ENCODE measurements at regions of chr1 and their contacts with region 1.

Region 1: DNA sequence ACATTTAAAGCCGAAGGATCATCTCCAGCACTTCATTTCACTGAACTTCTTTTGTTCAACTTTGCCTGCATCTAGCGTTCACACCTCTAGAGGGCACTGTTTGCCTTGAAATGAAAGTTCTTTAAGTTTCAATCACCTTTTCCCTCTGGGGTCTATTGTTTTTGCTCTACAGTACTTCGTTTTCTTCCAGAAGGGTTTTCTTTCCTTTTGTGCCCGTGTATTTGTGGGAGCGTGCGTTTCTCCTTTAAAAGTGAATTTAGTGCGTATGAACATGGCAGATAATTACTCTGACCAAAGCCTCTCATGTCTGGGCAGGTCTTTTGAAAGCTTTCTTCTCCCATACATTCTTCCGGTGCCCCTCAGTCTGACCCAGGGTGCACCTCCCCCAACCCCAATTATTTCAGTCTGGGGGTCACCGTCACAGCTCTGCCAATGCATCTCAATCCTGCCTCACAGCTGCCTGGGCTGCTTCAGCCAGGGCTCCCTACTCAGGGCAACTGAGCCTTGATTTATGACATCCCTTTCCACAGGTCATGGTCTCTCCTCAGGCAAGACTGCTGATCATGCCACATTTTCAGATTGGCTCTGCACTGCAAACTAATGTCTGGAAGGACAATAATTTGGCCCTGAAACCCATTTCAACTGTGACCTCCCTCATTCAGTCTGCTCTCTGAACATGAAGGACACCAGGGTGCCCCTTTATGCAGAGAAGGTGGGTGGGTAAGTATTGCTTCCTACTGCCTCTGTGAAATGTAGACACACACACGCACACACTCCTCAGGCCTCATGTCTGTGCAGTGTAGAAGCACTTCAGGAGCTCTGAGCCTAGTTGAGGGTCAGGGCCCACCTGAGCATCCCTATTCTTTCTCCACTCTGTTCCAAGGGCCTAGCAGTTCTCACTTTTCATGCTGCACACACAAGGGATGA is 88.6 kb downstream of the NUF2 start:
- DNase-seq: peak; percentile 63
- H3K4me3 Mint-ChIP-seq: no peak overlapping the region
- H3K27ac Mint-ChIP-seq: no peak overlapping the region
- H3K4me1 Mint-ChIP-seq: peaks cover 2% of the 10 kb centered on the region
- H3K27me3 Mint-ChIP-seq: peaks cover 12% of the 10 kb centered on the region

Region 2: DNA sequence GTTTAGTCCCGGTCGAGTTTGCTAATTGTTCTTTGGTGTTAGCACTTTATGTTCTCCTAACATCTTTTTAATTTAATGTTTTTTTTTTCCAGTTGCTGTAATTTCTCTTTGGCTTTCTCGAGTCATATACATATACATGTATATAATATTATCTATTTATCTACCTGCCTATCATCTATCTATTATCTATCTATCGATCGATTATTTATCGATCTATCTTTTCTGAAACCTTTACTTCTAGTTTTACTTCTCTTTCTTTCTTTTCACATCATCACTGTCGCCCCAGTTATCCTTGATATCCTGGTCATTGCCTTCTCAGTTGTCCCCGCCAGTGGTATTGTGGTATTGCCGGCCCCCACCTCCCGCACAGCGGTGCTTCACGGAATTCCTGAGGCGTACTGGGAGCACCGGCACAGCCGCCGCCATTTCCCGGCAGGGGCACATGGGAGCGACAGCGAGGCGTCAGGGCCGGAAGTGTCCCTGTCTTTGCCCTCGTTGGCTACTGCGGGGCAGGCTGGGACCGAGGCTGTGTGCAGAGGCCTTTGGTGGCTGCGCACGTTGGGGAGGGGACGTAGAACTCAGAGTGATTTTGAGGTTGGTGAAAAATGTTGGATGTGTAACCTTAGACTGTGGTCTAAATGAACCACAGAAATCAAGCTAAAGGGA is 12.5 kb after region 1 on chr1:
- CTCF ChIA-PET with region 1: no interaction called
- intact Hi-C with region 1: no loop called
- DNase-seq: no peak
- H3K4me3 Mint-ChIP-seq: no peak overlapping the region
- H3K27ac Mint-ChIP-seq: no peak overlapping the region
- H3K4me1 Mint-ChIP-seq: no peaks in the 10 kb centered on the region
- H3K27me3 Mint-ChIP-seq: peaks cover 3% of the 10 kb centered on the region

Region 3: DNA sequence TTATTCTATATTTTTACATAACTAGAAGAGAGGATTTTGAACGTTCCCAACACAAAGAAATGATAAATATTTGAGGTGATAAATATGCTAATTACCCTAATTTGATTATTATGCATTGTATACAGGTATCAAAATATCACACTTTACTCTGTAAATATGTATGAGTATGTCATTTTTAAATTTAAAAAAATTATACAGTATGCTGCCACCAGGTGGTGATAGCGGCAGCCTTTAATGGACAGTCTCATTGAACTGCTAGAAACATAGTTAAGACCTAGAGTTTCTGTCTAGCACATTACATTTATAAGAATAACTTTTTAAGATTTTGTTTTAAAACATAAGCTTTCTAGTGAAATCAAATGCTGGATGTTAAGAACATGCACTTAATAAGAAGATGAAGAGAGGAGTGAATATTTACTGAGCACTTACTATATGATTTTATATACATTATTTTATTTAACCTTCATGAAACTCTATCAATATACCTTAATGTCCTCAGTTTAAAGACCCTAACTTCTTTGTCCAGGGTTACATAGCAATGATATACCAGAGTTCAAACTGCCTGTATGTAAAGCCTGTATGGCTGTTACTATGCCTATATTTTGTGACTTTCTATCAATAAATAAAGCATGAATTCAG is 118.5 kb after region 1 on chr1:
- CTCF ChIA-PET with region 1: no interaction called
- intact Hi-C with region 1: loop called (anchors 2 kb)
- DNase-seq: peak; percentile 34
- H3K4me3 Mint-ChIP-seq: no peak overlapping the region
- H3K27ac Mint-ChIP-seq: no peak overlapping the region
- H3K4me1 Mint-ChIP-seq: no peaks in the 10 kb centered on the region
- H3K27me3 Mint-ChIP-seq: peaks cover 2% of the 10 kb centered on the region